ENCODE measurements at regions of chr19 and their contacts with region 1.

Region 1: DNA sequence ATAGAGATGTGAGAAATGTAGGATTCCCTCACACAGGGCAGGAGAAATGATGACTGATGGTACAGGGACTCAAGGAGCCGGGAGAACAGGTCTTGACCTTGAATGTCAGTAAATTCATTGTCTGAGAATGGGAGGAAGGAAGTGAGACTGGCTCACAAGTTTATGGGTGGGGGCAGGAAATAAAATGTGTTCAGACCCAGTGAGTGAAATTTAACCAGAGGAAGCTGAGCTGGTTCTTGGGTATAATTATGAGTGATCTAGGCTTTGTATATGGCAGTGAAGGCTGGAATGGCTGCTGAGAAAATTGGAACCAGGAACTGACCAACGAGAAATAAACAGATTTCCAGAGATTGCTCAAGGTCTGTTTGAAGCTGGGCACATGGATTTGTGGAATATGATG is 6.3 kb upstream of the IGSF23 start:
- DNase-seq: no peak
- H3K4me3 ChIP-seq: no peak overlapping the region
- H3K27ac ChIP-seq: no peak overlapping the region
- H3K4me1 ChIP-seq: no peaks in the 10 kb centered on the region
- H3K27me3 ChIP-seq: no peaks in the 10 kb centered on the region
- CTCF ChIP-seq: no peak

Region 2: GRCh38 chr19:44657211-44657921 is 50.3 kb after region 1 on chr19:
- CTCF ChIA-PET with region 1: no interaction called
- dilution Hi-C with region 1: no loop called
- in situ Hi-C with region 1: no loop called
- intact Hi-C with region 1: loop called (anchors 1 kb)
- DNase-seq: no peak
- H3K4me3 ChIP-seq: no peak overlapping the region
- H3K27ac ChIP-seq: no peak overlapping the region
- H3K4me1 ChIP-seq: no peaks in the 10 kb centered on the region
- H3K27me3 ChIP-seq: no peaks in the 10 kb centered on the region
- CTCF ChIP-seq: peak; percentile 88